Psoas muscle (tissue), 8 donors: ENCODE measurements at regions of chr2 and their contacts with region 1.

Region 1: GRCh38 chr2:198053776-198054698 is 249.6 kb downstream of the PLCL1 start:
- DNase-seq: no peak
- ATAC-seq: peak; percentile 57 to 78 (median 68)
- H3K4me3 ChIP-seq: no peak overlapping the region
- H3K27ac ChIP-seq: peak overlapping the region; percentile 23
- H3K4me1 ChIP-seq: peaks cover 24% of the 10 kb centered on the region
- H3K27me3 ChIP-seq: no peaks in the 10 kb centered on the region
- CTCF ChIP-seq: peak; percentile 50

Region 2: GRCh38 chr2:197711578-197711977 is 342.5 kb before region 1 on chr2:
- intact Hi-C with region 1: no loop called
- DNase-seq: no peak
- ATAC-seq: peak in 1 of 4 donors; percentile 47
- H3K4me3 ChIP-seq: no peak overlapping the region
- H3K27ac ChIP-seq: no peak overlapping the region
- H3K4me1 ChIP-seq: peaks cover 19% of the 10 kb centered on the region
- H3K27me3 ChIP-seq: no peaks in the 10 kb centered on the region
- CTCF ChIP-seq: no peak

Region 3: GRCh38 chr2:197804049-197804757 is 249.8 kb before region 1 on chr2 and contains the start of gene PLCL1:
- intact Hi-C with region 1: loop called (anchors 5 to 10 kb)
- DNase-seq: peak; percentile 92 to 97
- ATAC-seq: peak; percentile 92 to 99 (median 96)
- H3K4me3 ChIP-seq: peak within 1 kb of the TSS; percentile 87
- H3K27ac ChIP-seq: peak within 1 kb of the TSS; percentile 82
- H3K4me1 ChIP-seq: peaks cover 45% of the 10 kb centered on the region
- H3K27me3 ChIP-seq: no peaks in the 10 kb centered on the region
- CTCF ChIP-seq: peak; percentile 6
- total RNA-seq, gene PLCL1: 9.6 to 25.4 (median 17.3) TPM